Activated CD4-positive, alpha-beta T cell treated with anti-CD3 and anti-CD28 coated beads for 36 hours (primary cell): ENCODE measurements at regions of chr4 and their contacts with region 1.

Region 1: GRCh38 chr4:60201057-60201673 is 999.0 kb upstream of the ADGRL3 start:
- DNase-seq: peak; percentile 67
- ATAC-seq: no peak
- H3K4me3 Mint-ChIP-seq: no peak overlapping the region
- H3K27ac Mint-ChIP-seq: no peak overlapping the region
- H3K4me1 Mint-ChIP-seq: no peaks in the 10 kb centered on the region
- H3K27me3 Mint-ChIP-seq: no peaks in the 10 kb centered on the region

Region 2: DNA sequence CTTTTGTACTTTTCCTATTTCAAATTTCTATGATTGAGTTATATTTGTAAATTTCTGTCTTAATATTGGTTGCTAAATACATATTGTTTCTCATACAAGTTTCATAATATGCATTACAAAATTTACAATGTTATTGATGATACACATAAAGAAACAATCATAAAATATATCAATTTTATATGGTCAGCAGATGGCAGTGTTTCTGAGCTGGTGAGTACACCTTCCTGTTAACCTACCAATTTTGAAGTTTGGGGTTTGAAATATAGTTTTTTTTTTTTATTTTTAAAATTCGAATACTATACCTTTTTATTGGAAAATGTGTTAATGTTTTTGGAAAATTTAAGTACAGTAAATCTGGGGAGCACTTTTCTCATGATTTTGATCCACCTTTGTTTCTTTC is 954.1 kb before region 1 on chr4:
- CTCF ChIA-PET with region 1: interaction called, 5 read pairs
- POLR2A ChIA-PET with region 1: no interaction called
- intact Hi-C with region 1: loop called in 1 of 2 experiments (anchors 5 kb)
- DNase-seq: no peak
- ATAC-seq: no peak
- H3K4me3 Mint-ChIP-seq: no peak overlapping the region
- H3K27ac Mint-ChIP-seq: no peak overlapping the region
- H3K4me1 Mint-ChIP-seq: no peaks in the 10 kb centered on the region
- H3K27me3 Mint-ChIP-seq: no peaks in the 10 kb centered on the region